Mammary epithelial cell (primary cell): ENCODE measurements at regions of chr16 and their contacts with region 1.

Region 1: DNA sequence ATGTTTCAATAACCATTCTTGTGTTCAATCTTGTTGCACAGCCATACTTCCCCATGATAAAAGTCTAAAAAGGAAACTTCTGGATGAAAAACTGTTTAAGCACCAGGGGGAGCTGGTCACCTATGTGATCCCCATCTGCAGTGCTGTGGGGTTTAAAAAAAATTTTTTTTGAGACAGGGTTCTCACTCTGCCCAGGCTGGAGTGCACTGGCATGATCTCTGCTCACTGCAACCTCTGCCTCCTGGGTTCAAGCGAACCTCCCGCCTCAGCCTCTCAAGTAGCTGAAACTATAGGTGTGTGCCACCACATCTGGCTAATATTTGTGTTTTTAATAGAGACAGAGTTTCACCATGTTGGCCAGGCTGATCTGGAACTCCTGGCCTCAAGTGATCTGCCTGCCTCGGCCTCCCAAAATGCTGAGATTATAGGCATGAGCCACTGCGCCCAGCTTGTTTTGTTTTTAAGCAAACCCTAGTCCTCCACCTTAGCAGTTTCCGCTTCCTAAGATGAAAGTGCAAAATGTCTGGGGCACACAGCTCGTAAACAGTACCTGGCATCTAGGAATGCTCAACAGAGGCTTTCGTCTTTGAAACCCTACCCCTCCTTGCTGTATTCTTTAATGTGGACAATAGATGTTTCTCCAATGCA is 25.4 kb downstream of the DNAJA2 start:
- DNase-seq: peak; percentile 26
- H3K4me3 ChIP-seq: no peak overlapping the region
- H3K27ac ChIP-seq: no peak overlapping the region
- H3K4me1 ChIP-seq: no peaks in the 10 kb centered on the region
- H3K27me3 ChIP-seq: no peaks in the 10 kb centered on the region
- CTCF ChIP-seq: peak; percentile 48 to 62

Region 2: DNA sequence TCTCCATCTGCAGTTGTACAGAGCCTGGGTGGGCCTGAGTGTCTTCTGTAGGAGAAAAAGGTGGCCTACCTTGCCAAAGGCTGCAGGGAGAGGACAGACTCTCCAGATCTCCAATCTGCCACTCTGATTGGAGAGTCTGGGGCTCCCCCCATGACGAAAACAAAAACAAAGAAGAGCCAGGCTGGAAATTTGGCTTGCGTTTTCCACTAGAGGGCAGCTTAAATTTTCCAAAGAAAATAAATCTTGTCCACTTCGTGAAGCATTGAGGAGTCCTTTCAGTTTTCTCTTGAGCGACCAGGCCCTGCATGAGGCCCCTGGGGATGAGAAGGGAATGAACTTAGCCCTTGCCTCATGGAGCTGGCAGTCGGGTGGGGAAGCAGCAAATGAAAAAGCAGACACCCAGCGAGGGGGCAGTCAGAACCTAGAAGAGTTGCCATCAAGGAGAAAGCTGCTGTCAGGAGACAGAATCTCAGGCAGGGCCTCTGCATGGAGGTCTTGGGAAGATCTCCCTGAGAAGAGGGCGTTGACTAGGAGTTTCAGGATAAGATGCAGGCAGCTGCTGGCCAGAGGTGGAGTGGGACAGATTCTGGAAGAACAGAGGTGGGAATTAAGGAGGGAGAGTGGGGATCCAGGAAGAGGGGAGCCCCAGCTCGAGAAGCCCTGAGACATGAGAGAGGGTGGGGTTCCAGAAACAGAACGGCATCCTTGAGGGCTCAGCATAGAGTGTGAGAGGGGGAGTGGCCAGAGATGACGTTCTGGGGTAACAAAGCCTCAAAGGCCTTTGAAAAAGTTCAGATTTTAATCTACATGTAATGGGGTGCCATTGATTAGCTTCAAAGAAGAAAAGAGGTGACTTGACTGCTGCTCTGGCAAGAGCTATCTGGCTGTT is 318.4 kb before region 1 on chr16:
- CTCF ChIA-PET with region 1: no interaction called
- dilution Hi-C with region 1: no loop called
- in situ Hi-C with region 1: no loop called
- intact Hi-C with region 1: no loop called
- DNase-seq: peak; percentile 50
- H3K4me3 ChIP-seq: no peak overlapping the region
- H3K27ac ChIP-seq: no peak overlapping the region
- H3K4me1 ChIP-seq: no peaks in the 10 kb centered on the region
- H3K27me3 ChIP-seq: no peaks in the 10 kb centered on the region
- CTCF ChIP-seq: peak; percentile 51 to 58

Region 3: GRCh38 chr16:46845952-46846351 is 102.1 kb before region 1 on chr16:
- CTCF ChIA-PET with region 1: interaction called, 11 read pairs
- dilution Hi-C with region 1: no loop called
- in situ Hi-C with region 1: no loop called
- intact Hi-C with region 1: no loop called
- DNase-seq: no peak
- H3K4me3 ChIP-seq: no peak overlapping the region
- H3K27ac ChIP-seq: no peak overlapping the region
- H3K4me1 ChIP-seq: no peaks in the 10 kb centered on the region
- H3K27me3 ChIP-seq: no peaks in the 10 kb centered on the region
- CTCF ChIP-seq: no peak

Region 4: DNA sequence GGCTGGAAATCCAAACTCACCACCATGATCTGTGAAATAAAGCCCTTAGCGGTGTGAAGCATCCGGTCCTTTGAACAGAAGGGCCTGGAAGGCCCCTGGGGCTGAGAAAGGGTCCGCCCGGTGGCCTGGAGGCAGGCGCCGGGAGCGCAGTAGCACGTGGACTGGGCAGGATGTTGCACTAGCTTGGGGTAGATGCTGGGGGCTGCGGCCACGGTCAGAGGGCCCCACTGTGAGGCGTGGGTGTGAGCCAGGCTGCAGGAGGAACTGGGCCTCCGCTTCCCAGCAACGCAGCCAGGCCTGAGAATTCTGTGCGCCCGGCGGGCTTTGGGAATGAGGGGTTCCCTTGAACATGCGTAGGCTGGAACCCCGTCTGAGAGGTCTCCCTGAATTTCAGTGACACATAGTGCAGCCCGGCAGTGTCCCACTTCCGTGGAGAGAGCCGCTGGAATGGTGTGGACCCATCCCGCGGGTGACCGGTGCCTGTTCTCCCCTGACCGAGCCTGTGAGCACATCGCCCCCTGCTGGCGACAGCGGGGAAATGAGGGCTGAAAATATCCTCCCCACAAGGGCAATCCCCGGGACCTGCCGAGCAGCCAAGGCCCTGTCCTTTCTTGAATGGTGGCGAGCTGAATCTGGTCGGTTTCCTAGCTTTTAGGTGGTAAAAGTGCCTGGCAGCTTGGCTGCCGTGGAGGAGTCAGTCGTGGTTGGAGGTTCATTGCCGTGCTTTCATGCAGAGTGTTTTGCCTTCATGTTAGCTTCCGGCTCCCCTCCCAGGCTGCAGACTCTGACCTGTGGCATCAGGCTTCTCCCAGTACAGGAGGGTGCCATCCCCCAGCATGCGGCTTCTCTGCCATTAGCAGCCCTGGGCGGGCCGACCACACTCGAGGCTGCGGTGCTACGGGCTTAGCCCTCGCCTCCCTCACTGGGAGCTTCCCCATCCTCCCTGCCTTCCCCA is 18.4 kb before region 1 on chr16:
- CTCF ChIA-PET with region 1: no interaction called
- dilution Hi-C with region 1: no loop called
- in situ Hi-C with region 1: no loop called
- intact Hi-C with region 1: no loop called
- DNase-seq: peak; percentile 31
- H3K4me3 ChIP-seq: no peak overlapping the region
- H3K27ac ChIP-seq: no peak overlapping the region
- H3K4me1 ChIP-seq: no peaks in the 10 kb centered on the region
- H3K27me3 ChIP-seq: no peaks in the 10 kb centered on the region
- CTCF ChIP-seq: peak; percentile 86 to 89

Region 5: DNA sequence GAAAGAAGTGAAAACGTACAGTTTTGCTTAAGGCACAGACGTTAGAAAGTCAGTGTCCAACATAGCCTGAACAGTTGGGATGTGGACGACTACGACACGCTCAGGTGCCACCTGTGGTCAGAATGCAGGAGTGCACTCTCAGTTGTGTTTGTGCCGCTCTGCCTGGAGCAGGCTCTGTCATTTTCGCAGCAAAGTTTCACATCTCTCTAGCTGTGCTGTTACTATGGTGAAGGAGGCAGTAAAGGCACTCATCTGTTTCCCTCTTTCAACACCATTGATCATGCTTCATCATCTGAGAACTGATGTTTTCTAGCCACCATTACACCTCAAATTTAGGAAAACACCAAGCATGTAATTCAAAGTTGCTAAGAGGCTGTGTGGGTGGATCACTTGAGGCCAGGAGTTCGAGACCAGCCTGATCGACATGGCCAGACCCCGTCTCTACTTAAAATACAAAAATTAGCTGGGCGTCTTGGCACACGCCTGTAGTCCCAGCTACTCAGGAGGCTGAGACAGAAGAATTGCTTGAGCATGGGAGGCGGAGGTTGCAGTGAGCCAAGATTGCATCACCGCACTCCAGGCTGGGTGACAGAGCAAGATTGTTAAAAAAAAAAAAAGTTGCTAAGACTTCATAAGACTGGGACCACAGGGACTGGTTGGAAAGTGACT is 70.3 kb after region 1 on chr16:
- CTCF ChIA-PET with region 1: interaction called, 3 read pairs
- dilution Hi-C with region 1: no loop called
- in situ Hi-C with region 1: no loop called
- intact Hi-C with region 1: loop called (anchors 1 kb)
- DNase-seq: peak; percentile 56
- H3K4me3 ChIP-seq: no peak overlapping the region
- H3K27ac ChIP-seq: no peak overlapping the region
- H3K4me1 ChIP-seq: no peaks in the 10 kb centered on the region
- H3K27me3 ChIP-seq: no peaks in the 10 kb centered on the region
- CTCF ChIP-seq: peak; percentile 57 to 82

Region 6: GRCh38 chr16:47037746-47038458 is 89.9 kb after region 1 on chr16:
- CTCF ChIA-PET with region 1: no interaction called
- dilution Hi-C with region 1: no loop called
- in situ Hi-C with region 1: no loop called
- intact Hi-C with region 1: loop called (anchors 5 kb)
- DNase-seq: peak; percentile 68
- H3K4me3 ChIP-seq: peak overlapping the region; percentile 63 to 80 (median 70)
- H3K27ac ChIP-seq: peak overlapping the region; percentile 26
- H3K4me1 ChIP-seq: peaks cover 4% of the 10 kb centered on the region
- H3K27me3 ChIP-seq: no peaks in the 10 kb centered on the region
- CTCF ChIP-seq: peak; percentile 76 to 94